ENCODE measurements at regions of chr6 and their contacts with region 1.

Region 1: GRCh38 chr6:6758915-6759654 is 170.6 kb downstream of the LY86 start:
- DNase-seq: no peak
- ATAC-seq: peak; percentile 90

Region 2: DNA sequence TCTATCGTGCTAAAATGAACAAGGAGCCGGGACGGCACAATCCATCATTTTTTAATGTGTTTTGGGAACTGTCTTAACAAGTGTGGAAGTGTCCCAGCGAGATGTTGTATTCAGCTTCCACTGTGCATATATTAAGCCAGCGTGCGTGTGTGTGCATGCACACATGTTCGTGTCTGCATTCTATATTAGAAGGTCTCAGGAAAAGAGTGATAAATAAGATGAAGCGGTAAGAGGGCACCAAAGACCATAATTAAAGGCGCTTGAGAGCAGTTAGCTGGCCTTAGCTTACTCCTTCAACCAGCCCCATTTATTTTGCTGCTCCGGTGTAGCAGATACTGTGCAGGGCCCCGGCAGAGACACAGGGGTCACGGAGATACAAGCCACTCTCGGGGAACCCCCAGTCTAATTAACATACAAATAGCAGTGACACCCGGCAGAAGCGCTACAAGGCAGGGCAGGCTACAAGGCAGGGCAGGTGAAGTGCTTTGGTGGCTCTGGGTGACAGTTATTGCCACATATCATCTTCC is 142.2 kb after region 1 on chr6:
- intact Hi-C with region 1: loop called (anchors 10 kb)
- DNase-seq: no peak
- ATAC-seq: peak; percentile 18

Measured in Right ventricle myocardium superior (tissue), 1 donor.